ENCODE measurements at regions of chr3 and their contacts with region 1.

Region 1: DNA sequence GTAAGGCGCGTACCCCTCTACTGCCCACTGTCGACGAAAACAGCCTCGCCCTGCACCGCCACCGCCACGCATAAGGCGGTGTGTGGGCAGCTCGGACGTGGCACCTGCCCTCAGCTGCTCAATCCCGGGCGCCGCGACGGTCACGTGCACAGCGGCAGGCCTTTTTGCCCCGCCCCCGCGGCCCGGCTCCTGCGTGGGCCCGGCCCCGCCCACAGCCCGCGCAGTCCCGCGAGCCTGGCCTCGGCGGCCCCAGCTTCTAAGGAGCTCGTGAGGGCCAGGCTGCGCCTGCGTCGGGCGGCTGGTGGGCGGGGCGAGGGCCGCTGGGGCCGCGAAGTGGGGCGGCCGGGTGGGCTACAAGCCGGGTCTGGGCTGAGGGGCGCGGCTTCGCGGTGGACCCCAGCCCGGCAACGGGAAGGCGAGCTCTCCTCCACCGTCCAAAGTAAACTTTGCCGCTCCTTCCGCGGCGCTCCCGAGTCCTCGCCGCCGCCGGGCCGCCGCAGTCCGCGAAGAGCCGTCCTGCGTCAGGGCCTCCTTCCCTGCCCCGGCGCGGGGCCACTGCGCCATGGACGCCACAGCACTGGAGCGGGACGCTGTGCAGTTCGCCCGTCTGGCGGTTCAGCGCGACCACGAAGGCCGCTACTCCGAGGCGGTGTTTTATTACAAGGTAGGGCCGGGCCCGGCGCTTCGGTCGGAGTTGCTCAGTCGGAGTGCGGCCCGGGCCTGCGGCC is at the start of gene CAPN7:
- DNase-seq: peak; percentile 72 to 95
- H3K4me3 ChIP-seq: peak within 1 kb of the TSS; percentile 98
- H3K27ac ChIP-seq: peak within 1 kb of the TSS; percentile 50
- H3K4me1 ChIP-seq: peaks cover 19% of the 10 kb centered on the region
- H3K27me3 ChIP-seq: no peaks in the 10 kb centered on the region
- CTCF ChIP-seq: no peak
- total RNA-seq, gene CAPN7: 28.5 and 29.5 TPM in 2 replicates

Region 2: DNA sequence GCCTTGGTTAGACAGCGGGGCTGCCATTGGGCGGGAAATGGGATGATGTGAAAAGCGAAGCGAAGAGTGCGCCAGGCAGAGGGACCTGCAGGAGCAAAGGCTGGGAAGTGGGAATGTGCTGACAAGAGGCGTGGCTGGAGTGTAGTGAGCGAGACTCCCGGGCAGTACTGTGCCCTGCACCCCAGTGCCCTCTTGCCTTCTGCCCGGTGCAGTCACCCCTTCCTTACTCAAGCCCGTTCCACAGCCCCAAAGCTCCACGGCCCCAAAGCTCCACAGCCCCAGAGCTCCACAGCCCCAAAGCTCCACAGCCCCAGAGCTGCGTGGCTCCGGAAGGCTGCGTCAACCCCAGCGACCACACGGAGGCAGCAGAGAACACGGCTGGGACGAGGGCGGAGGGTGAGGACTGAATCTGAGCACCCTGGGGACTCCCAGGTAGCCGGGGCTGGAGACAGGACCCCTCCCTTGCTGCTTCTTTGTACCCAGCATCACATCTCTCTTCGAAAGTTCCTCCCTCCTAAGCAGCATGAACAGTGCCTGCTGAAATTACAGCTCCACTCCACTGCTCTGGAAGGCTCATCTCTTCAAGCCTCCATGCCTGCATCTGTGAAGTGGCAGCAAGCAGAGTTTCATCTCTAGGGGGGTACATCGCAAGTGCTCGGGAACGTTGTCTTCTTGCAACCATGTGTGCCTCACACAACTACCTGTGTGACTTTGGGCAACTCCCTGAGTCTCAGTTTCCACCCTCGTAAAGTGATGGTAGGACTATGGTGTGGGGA is 1548.2 kb before region 1 on chr3:
- CTCF ChIA-PET with region 1: no interaction called
- POLR2A ChIA-PET with region 1: no interaction called
- intact Hi-C with region 1: no loop called
- DNase-seq: peak; percentile 39 to 67
- H3K4me3 ChIP-seq: no peak overlapping the region
- H3K27ac ChIP-seq: no peak overlapping the region
- H3K4me1 ChIP-seq: peaks cover 34% of the 10 kb centered on the region
- H3K27me3 ChIP-seq: no peaks in the 10 kb centered on the region
- CTCF ChIP-seq: peak; percentile 95

Region 3: DNA sequence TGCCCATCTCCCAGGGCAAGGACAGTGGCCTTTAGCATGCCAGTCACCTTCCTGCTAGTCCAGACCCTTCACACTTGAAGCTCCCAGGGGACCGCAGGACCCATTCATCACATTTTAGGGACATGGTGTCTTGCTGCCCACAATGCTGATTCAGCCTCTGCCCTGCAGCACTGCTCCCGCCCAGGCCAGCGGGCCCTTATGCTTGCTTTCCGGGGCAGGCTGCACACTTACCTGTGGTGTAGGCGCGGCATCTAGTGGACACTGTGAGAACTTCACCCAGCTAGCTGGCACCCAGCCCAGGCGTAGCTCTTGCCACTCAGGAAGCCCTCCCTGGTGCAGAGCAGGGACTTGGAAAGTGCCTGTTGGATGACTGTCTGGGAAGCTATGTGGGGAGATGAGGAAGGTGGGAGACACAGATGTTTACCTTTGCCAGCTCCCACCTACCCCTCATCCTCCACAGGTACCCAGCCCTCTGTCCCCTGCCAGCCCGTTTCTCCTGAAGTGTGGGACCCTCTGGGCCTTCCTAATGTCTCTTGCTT is 285.0 kb before region 1 on chr3:
- CTCF ChIA-PET with region 1: no interaction called
- POLR2A ChIA-PET with region 1: no interaction called
- intact Hi-C with region 1: loop called (anchors 2 kb)
- DNase-seq: peak; percentile 68 to 83
- H3K4me3 ChIP-seq: no peak overlapping the region
- H3K27ac ChIP-seq: no peak overlapping the region
- H3K4me1 ChIP-seq: no peaks in the 10 kb centered on the region
- H3K27me3 ChIP-seq: no peaks in the 10 kb centered on the region
- CTCF ChIP-seq: peak; percentile 98

Region 4: DNA sequence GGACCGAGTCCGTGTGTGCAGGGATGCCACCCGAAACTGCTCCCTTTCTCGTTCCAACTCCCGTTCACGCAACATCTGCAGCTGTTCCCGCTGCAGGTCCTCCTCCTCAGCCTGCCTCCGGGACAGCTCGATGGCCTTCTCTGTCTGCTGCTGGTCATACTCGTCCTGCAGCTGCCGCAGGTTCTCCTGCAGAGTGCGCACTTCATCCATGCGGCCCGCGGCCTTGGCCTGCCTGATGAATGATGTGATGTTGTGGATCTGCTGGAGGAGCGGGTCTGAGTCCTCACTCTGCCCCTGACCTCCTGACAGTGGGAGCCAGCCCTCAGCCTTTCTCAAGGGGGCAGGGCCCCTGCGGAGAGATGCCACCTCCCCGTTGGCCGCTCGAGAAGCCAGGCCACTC is 131.6 kb before region 1 on chr3:
- CTCF ChIA-PET with region 1: no interaction called
- POLR2A ChIA-PET with region 1: no interaction called
- intact Hi-C with region 1: no loop called
- DNase-seq: no peak
- H3K4me3 ChIP-seq: no peak overlapping the region
- H3K27ac ChIP-seq: no peak overlapping the region
- H3K4me1 ChIP-seq: no peaks in the 10 kb centered on the region
- H3K27me3 ChIP-seq: no peaks in the 10 kb centered on the region
- CTCF ChIP-seq: no peak

Region 5: DNA sequence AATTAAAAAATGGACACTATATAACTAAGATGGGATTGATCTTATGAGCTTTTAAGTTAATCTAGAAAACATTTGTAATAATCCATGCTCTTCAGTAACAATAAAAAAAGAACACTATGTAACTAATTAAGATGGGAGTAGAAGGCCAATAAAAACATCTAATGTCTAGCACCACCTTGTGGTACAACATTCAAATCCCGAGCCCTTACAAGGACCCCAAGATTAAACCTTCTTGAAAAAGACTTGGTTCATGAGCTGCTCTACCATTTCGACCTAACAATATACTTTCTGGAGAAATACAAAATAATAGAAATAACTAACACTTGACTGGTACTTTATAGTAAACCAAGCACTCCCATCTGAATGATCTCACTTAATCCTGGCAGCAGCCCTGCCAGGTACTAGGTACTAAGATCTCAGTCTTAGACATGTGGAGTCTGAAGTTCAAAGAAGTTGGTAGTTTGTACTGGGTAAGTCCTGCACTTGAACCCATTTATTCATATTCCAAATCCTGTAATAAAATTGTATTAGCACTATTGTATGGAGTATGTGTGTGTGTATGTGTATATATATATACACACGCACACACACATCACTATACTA is 199.5 kb after region 1 on chr3:
- CTCF ChIA-PET with region 1: interaction called, 6 read pairs
- POLR2A ChIA-PET with region 1: no interaction called
- intact Hi-C with region 1: loop called (anchors 1 kb)
- DNase-seq: no peak
- H3K4me3 ChIP-seq: no peak overlapping the region
- H3K27ac ChIP-seq: no peak overlapping the region
- H3K4me1 ChIP-seq: peaks cover 8% of the 10 kb centered on the region; the same call in 1 of the 2 replicates
- H3K27me3 ChIP-seq: no peaks in the 10 kb centered on the region
- CTCF ChIP-seq: peak; percentile 84

Region 6: DNA sequence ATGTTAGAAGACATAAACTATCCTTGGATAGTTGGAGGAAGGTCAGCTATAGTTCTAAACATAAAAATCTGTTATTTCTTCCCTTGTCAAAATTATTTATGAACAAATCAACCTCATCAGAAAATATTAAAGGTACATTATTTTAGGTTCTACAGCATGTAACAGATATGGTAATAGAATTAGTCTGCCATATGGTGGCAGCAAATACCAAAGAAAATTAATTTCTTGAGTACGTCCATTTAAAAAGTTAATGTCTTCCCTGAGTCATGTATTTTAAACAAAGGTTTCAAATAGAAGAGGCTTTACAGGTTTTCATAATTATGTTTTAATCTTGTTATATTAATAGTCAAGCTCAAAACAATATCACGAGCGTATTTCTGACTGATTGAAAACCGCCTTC is 609.6 kb after region 1 on chr3:
- CTCF ChIA-PET with region 1: no interaction called
- POLR2A ChIA-PET with region 1: interaction called, 4 read pairs
- intact Hi-C with region 1: loop called (anchors 5 kb)
- DNase-seq: peak in 1 of 2 experiments; percentile 35
- H3K4me3 ChIP-seq: no peak overlapping the region
- H3K27ac ChIP-seq: no peak overlapping the region
- H3K4me1 ChIP-seq: no peaks in the 10 kb centered on the region
- H3K27me3 ChIP-seq: no peaks in the 10 kb centered on the region
- CTCF ChIP-seq: peak; percentile 68

Region 7: GRCh38 chr3:16550676-16551341 is 1344.7 kb after region 1 on chr3:
- CTCF ChIA-PET with region 1: no interaction called
- POLR2A ChIA-PET with region 1: no interaction called
- intact Hi-C with region 1: loop called (anchors 10 kb)
- DNase-seq: peak; percentile 61 to 75
- H3K4me3 ChIP-seq: no peak overlapping the region
- H3K27ac ChIP-seq: no peak overlapping the region
- H3K4me1 ChIP-seq: no peaks in the 10 kb centered on the region
- H3K27me3 ChIP-seq: no peaks in the 10 kb centered on the region
- CTCF ChIP-seq: peak; percentile 89

Measured in PC-9 (cell line).